ENCODE measurements at regions of chr2 and their contacts with region 1.

Region 1: GRCh38 chr2:136207665-136208064 is 89.7 kb upstream of the CXCR4 start:
- DNase-seq: no peak
- ATAC-seq: peak; percentile 18
- H3K4me3 ChIP-seq: no peak overlapping the region
- H3K4me3 Mint-ChIP-seq: no peak overlapping the region
- H3K27ac ChIP-seq: no peak overlapping the region
- H3K27ac Mint-ChIP-seq: peak overlapping the region in 3 of 9 donors; percentile 14 to 75 (median 54)
- H3K4me1 ChIP-seq: peaks cover 14 to 28% of the 10 kb centered on the region in 2 donors
- H3K4me1 Mint-ChIP-seq: peaks cover 26 to 44% (median 36%) of the 10 kb centered on the region in 7 donors
- H3K27me3 ChIP-seq: no peaks in the 10 kb centered on the region
- H3K27me3 Mint-ChIP-seq: no peaks in the 10 kb centered on the region

Region 2: GRCh38 chr2:136191041-136191440 is 16.6 kb before region 1 on chr2:
- CTCF ChIA-PET with region 1: no interaction called
- POLR2A ChIA-PET with region 1: interaction called, 3 read pairs
- intact Hi-C with region 1: loop called in 1 of 2 experiments (anchors 2 kb)
- DNase-seq: no peak
- ATAC-seq: no peak
- H3K4me3 ChIP-seq: no peak overlapping the region
- H3K4me3 Mint-ChIP-seq: no peak overlapping the region
- H3K27ac ChIP-seq: no peak overlapping the region
- H3K27ac Mint-ChIP-seq: peak overlapping the region in 1 of 9 donors; percentile 30
- H3K4me1 ChIP-seq: no peaks in the 10 kb centered on the region
- H3K4me1 Mint-ChIP-seq: peaks cover 0 to 8% (median 0%) of the 10 kb centered on the region in 7 donors
- H3K27me3 ChIP-seq: no peaks in the 10 kb centered on the region
- H3K27me3 Mint-ChIP-seq: no peaks in the 10 kb centered on the region

Measured in naive thymus-derived CD4-positive, alpha-beta T cell (primary cell).